ENCODE measurements at regions of chr12 and their contacts with region 1.

Region 1: DNA sequence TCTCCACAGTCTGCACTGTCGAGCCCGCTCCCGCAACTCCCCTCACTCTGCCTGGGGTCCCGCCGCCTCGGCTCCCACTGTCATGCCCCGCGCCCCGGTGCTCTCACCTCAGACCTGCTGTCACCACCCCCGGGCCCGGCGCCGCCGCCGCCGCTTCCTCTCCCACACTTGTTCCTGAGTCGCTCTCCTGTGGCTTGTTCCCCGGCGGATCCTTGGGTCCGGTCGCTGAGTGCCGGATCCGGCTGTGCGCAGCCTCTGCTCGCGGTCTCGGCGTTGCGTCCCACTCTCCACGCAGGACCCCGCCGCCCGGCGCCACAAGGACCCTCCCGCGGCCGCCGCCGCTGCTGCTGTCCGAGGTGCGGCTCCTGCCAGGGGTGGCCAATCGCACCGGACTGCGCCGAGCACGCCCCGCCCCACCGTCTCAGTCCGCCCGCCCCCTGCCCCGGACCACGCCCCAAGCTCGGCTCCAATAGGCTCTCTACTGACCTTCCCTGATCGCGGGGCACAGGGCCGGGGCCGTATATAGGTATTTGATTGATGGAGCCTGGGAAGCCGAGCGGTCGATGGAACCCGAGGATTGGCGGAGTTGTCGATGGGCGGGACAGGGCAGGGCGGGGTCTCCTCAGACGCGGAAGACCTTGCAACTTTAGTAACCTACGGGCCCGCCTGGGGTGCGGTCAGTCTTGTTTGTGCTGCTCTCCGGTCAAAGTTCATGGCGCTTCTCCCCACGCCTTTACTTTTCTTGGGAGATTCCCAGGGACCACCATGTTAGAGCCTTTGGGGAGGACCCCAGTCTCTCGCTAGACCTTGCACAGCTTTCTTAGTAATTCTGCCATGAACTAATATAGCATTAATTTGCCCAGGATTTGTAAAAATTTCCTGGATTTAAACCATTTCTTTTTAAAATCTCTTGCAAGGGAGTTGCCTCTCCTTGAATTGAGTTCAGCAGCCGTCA is at the start of gene TAOK3:
- DNase-seq: peak; percentile 94
- H3K4me3 Mint-ChIP-seq: peak within 1 kb of the TSS; percentile 97
- H3K27ac Mint-ChIP-seq: peak within 1 kb of the TSS; percentile 77
- H3K4me1 Mint-ChIP-seq: peaks cover 52% of the 10 kb centered on the region
- H3K27me3 Mint-ChIP-seq: peaks cover 13% of the 10 kb centered on the region
- total RNA-seq, gene TAOK3: 59.5 and 59.7 TPM in 2 replicates

Region 2: DNA sequence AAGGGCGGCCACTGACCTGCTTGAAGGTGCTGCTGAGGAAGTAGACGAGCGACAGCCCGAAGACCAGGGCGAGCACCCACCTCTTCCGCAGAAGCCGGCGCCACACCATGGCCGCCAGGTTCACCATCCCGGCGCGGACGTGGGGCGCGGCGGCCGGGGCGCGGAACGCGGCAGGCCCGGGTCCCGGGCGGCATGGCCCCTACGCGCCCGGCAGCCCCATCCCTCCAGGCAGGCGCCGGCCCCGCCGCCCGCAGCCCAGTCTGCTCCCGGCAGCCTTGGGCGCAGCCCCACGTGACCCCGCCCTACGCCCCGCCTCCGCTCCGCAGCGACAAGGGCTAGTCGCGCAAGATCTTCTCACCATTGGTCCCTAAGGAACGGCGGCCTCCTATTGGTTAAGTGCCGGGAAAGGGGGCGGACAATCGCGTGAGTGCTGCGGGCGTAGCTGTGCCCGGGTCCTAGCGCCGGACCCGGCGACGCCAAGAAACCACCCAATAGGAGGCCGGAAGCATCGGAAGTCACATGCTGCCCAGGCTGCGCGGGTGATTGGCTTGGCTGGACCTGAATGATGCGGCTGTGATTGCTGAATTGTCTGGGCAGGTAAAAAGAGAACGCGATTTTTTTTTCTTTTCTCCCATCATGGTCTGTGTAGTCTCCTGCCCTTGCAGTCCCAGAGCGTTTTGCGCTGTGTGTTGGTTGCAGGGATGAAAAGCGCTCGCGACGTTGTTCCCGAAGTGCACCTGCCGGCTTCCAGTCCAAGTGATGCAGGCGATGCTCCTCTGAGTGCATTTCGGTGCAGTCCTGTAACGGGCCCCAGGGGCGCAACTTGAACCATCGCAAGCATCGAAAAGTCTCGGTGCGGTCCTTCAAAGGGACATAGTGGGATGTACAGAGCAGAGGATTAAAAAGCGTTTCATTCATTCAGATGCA is 1634.8 kb before region 1 on chr12 and contains the starts of genes RNFT2 and SPRING1:
- intact Hi-C with region 1: loop called (anchors 2 kb)
- DNase-seq: peak; percentile 99
- H3K4me3 Mint-ChIP-seq: peak within 1 kb of the TSS; percentile 85
- H3K27ac Mint-ChIP-seq: peak within 1 kb of the TSS; percentile 85
- H3K4me1 Mint-ChIP-seq: peaks cover 13% of the 10 kb centered on the region
- H3K27me3 Mint-ChIP-seq: no peaks in the 10 kb centered on the region
- total RNA-seq, gene RNFT2: 8.0 and 11.8 TPM in 2 replicates
- total RNA-seq, gene SPRING1: 31.0 and 39.0 TPM in 2 replicates

Region 3: GRCh38 chr12:118035246-118036041 is 337.4 kb before region 1 on chr12:
- intact Hi-C with region 1: loop called (anchors 2 kb)
- DNase-seq: no peak
- H3K4me3 Mint-ChIP-seq: peak overlapping the region; percentile 57
- H3K27ac Mint-ChIP-seq: peak overlapping the region; percentile 99
- H3K4me1 Mint-ChIP-seq: peaks cover 46% of the 10 kb centered on the region
- H3K27me3 Mint-ChIP-seq: no peaks in the 10 kb centered on the region

Region 4: DNA sequence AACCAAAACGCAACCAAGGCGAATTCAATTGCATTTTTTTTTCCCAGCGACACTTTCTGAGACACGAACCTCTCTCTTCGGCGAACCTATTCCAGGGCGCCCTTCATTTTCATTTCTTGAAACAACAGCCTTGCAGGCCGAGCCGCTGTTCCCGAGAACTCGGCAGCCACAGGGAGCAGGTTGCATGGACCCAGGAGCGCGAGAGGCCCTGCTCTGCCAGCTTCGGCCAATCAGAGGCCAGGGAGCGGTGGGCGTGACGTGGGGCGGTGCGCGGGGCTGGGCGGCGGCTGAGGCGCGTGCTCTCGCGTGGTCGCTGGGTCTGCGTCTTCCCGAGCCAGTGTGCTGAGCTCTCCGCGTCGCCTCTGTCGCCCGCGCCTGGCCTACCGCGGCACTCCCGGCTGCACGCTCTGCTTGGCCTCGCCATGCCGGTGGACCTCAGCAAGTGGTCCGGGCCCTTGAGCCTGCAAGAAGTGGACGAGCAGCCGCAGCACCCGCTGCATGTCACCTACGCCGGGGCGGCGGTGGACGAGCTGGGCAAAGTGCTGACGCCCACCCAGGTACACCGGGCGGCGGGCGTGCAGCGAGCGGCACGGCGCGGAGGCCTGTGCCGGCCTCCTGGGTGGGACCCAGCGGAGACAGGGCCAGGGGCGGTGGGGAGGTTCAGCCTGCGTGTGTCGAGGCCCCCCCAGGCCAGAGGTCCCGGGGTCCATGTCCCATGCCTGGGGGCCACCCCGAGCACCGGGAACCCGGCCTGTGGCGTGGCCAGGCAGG is 236.8 kb before region 1 on chr12 and contains the start of gene PEBP1:
- intact Hi-C with region 1: loop called (anchors 1 kb)
- DNase-seq: peak; percentile 93
- H3K4me3 Mint-ChIP-seq: peak within 1 kb of the TSS; percentile 95
- H3K27ac Mint-ChIP-seq: peak within 1 kb of the TSS; percentile 89
- H3K4me1 Mint-ChIP-seq: peaks cover 18% of the 10 kb centered on the region
- H3K27me3 Mint-ChIP-seq: no peaks in the 10 kb centered on the region
- total RNA-seq, gene PEBP1: 200 and 205 TPM in 2 replicates

Region 5: GRCh38 chr12:118307069-118307954 is 65.5 kb before region 1 on chr12:
- intact Hi-C with region 1: loop called (anchors 1 kb)
- DNase-seq: peak; percentile 2
- H3K4me3 Mint-ChIP-seq: peak overlapping the region; percentile 70
- H3K27ac Mint-ChIP-seq: peak overlapping the region; percentile 62
- H3K4me1 Mint-ChIP-seq: peaks cover 33% of the 10 kb centered on the region
- H3K27me3 Mint-ChIP-seq: no peaks in the 10 kb centered on the region

Region 6: GRCh38 chr12:119667577-119668323 is 1294.9 kb after region 1 on chr12 and contains the start of gene PRKAB1:
- intact Hi-C with region 1: loop called (anchors 5 kb)
- DNase-seq: peak; percentile 96
- H3K4me3 Mint-ChIP-seq: peak within 1 kb of the TSS; percentile 95
- H3K27ac Mint-ChIP-seq: peak within 1 kb of the TSS; percentile 82
- H3K4me1 Mint-ChIP-seq: peaks cover 49% of the 10 kb centered on the region
- H3K27me3 Mint-ChIP-seq: no peaks in the 10 kb centered on the region
- total RNA-seq, gene PRKAB1: 30.3 and 33.7 TPM in 2 replicates